ENCODE measurements at regions of chr1 and their contacts with region 1.

Region 1: GRCh38 chr1:162145280-162145965 is 75.9 kb downstream of the NOS1AP start:
- DNase-seq: peak; percentile 56
- ATAC-seq: peak; percentile 87
- H3K4me3 ChIP-seq: peak overlapping the region; percentile 27 to 63 (median 43)
- H3K27ac ChIP-seq: peak overlapping the region; percentile 85
- H3K4me1 ChIP-seq: peaks cover 85% of the 10 kb centered on the region
- H3K27me3 ChIP-seq: no peaks in the 10 kb centered on the region
- CTCF ChIP-seq: no peak
- EP300 ChIP-seq: no peak
- POLR2A ChIP-seq: no peak
- RAD21 ChIP-seq: no peak

Region 2: DNA sequence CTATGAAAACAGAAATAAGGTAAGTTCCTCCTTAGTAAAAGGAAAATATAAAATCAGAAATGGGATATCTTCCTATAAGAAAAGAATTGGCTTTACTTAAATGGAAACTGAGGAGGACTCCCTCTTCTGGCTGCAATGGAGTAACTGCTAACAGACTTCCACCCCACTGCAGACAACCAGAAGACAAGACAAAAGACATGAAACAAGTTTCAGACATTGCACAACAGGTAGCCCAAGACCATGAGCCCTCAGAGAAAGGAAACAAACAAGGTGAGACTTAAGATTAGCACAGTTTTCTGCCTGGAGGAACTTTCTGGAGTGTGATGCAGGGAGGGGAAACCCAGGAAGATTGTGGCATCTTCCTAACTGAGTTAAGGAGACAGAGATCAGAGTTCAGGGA is 104.7 kb before region 1 on chr1:
- CTCF ChIA-PET with region 1: no interaction called
- POLR2A ChIA-PET with region 1: no interaction called
- in situ Hi-C with region 1: no loop called
- intact Hi-C with region 1: no loop called
- DNase-seq: peak; percentile 12
- ATAC-seq: peak; percentile 56; the same call in 2 of the 3 replicates
- H3K4me3 ChIP-seq: no peak overlapping the region
- H3K27ac ChIP-seq: no peak overlapping the region
- H3K4me1 ChIP-seq: peaks cover 11% of the 10 kb centered on the region
- H3K27me3 ChIP-seq: no peaks in the 10 kb centered on the region; a peak in 1 of 5 replicates
- CTCF ChIP-seq: peak; percentile 35
- EP300 ChIP-seq: no peak
- POLR2A ChIP-seq: no peak
- RAD21 ChIP-seq: no peak

Region 3: DNA sequence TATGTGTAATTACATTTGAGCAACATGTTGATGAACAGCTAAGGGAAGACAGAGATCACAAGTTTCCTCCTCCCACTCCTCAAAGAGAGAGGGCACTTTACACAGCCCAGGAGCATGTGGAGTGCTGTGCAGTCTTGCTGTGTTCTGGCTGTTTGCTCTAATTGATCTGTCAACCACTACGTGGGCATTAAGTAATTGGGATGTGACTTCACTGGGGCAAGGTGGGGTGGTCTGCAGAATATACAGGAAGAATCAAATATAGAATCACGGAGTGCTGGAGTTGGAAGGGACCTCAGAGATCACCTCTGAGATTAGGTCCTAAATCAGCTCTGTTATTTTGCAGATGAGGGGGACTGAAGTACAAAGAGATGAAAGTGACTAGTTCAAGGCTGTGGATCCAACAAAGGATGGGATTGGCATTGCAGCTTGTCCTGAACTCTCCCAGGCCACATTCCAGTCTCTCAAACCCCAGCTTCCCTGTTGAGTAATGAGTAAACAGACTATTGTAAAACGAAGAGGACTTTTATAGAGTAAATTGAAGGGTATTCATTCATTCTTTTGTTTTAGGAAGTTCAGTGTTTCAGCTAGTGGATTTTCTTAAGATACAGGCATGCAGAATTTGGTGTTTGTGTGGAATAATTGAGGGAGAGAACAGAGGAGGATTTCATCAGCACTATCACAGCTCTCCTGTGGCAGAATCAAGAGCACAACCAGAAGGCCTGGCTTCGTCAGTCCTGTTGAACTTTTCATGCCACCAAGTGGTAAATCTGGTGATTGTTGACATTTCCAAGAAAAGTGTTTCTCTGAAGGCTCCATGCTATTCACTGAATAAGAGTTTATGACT is 53.5 kb before region 1 on chr1:
- CTCF ChIA-PET with region 1: no interaction called
- POLR2A ChIA-PET with region 1: interaction called, 12 read pairs
- in situ Hi-C with region 1: no loop called
- intact Hi-C with region 1: no loop called
- DNase-seq: peak; percentile 97
- ATAC-seq: peak; percentile 96
- H3K4me3 ChIP-seq: peak overlapping the region; percentile 8 to 50 (median 29); a peak in 4 of 6 replicates
- H3K27ac ChIP-seq: peak overlapping the region; percentile 71
- H3K4me1 ChIP-seq: peaks cover 81% of the 10 kb centered on the region
- H3K27me3 ChIP-seq: no peaks in the 10 kb centered on the region
- CTCF ChIP-seq: no peak; the same call in 1 of the 2 replicates
- EP300 ChIP-seq: peak; percentile 53 to 94; a peak in 3 of 4 replicates
- POLR2A ChIP-seq: no peak
- RAD21 ChIP-seq: no peak; the same call in 1 of the 2 replicates

Region 4: DNA sequence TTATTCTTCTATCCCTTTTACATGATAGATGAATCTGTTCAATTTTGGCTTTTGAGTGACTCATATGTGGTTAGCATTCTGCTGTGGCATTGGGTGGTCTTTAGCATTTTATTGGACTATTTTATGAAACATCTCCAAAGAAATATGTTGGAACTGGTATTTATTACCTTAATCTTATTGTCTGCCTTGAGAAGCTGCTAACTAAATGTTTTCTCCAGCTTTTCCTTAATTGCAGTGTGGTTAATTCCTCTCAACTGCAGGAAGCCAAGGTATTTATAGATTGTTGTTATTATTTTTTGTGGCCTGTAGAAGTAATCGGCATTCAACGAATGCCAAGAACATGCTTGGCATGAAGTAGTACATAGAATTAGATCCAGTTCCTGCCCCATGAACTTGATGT is 11.9 kb before region 1 on chr1:
- CTCF ChIA-PET with region 1: no interaction called
- POLR2A ChIA-PET with region 1: interaction called, 41 read pairs
- in situ Hi-C with region 1: no loop called
- intact Hi-C with region 1: loop called (anchors 1 kb)
- DNase-seq: no peak
- ATAC-seq: no peak
- H3K4me3 ChIP-seq: no peak overlapping the region
- H3K27ac ChIP-seq: no peak overlapping the region
- H3K4me1 ChIP-seq: peaks cover 98% of the 10 kb centered on the region
- H3K27me3 ChIP-seq: no peaks in the 10 kb centered on the region
- CTCF ChIP-seq: no peak
- EP300 ChIP-seq: no peak
- POLR2A ChIP-seq: no peak
- RAD21 ChIP-seq: no peak

Region 5: DNA sequence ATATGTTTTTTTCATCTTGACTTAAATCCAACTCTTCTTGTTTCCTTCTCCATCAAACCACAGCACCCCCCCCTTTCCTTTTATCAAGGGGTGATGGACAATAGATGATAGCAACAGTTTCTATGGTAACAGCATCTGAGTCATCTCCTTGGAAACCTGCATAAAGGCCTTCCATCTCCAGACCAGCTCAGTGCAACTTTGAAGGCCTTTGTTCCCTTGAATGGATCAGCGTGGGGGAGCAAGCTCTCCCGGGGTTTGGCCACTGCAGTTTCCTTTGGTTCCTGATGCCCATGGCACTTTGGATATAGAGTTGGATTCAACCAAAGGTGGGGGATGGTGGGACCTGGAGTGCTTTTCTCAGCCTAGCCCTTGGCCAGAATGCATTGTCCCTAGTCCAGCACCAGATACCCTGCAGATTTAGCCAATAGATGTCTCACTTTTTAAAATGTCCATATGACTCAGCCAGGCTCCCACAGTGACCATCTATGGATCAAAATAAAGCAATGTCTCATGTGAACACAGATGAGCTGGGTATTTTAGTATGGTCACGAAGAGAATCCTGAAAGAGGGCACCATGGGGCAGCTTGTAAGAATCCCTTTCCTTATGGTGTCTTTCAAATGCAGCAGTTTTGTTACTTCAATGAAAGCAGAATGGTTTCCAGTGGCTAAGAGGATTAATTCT is 103.6 kb after region 1 on chr1:
- CTCF ChIA-PET with region 1: no interaction called
- POLR2A ChIA-PET with region 1: interaction called, 7 read pairs
- in situ Hi-C with region 1: no loop called
- intact Hi-C with region 1: loop called (anchors 1 kb)
- DNase-seq: no peak
- ATAC-seq: no peak
- H3K4me3 ChIP-seq: no peak overlapping the region
- H3K27ac ChIP-seq: peak overlapping the region; percentile 88
- H3K4me1 ChIP-seq: peaks cover 77% of the 10 kb centered on the region
- H3K27me3 ChIP-seq: no peaks in the 10 kb centered on the region
- CTCF ChIP-seq: no peak
- EP300 ChIP-seq: no peak
- POLR2A ChIP-seq: no peak
- RAD21 ChIP-seq: no peak

Region 6: GRCh38 chr1:162305969-162306368 is 160.5 kb after region 1 on chr1:
- CTCF ChIA-PET with region 1: no interaction called
- POLR2A ChIA-PET with region 1: no interaction called
- in situ Hi-C with region 1: no loop called
- intact Hi-C with region 1: no loop called
- DNase-seq: peak; percentile 12
- ATAC-seq: peak; percentile 71
- H3K4me3 ChIP-seq: no peak overlapping the region
- H3K27ac ChIP-seq: no peak overlapping the region
- H3K4me1 ChIP-seq: peaks cover 11% of the 10 kb centered on the region
- H3K27me3 ChIP-seq: no peaks in the 10 kb centered on the region
- CTCF ChIP-seq: no peak
- EP300 ChIP-seq: no peak
- POLR2A ChIP-seq: no peak
- RAD21 ChIP-seq: no peak